ENCODE measurements at regions of chr14 and their contacts with region 1.

Region 1: DNA sequence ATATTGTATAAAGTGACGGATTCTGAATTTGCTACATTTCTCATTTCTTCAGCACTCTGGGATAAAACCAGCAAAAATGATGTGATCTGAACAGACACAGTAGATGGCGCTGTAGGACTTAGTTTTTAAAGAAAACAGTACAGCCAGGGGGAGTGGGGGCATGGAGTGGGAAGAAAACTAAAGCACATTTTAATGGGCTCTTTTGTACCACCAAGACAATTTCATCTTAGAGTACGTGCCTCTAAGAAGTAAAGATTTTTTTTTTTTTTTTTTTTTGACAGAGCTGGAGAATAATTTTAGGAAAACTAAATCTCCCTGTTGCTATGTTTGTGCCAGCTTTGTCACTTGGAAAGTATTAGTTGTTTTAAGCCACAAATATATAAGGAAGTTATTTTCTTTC is 124.4 kb downstream of the RAD51B start:
- DNase-seq: peak; percentile 82

Region 2: DNA sequence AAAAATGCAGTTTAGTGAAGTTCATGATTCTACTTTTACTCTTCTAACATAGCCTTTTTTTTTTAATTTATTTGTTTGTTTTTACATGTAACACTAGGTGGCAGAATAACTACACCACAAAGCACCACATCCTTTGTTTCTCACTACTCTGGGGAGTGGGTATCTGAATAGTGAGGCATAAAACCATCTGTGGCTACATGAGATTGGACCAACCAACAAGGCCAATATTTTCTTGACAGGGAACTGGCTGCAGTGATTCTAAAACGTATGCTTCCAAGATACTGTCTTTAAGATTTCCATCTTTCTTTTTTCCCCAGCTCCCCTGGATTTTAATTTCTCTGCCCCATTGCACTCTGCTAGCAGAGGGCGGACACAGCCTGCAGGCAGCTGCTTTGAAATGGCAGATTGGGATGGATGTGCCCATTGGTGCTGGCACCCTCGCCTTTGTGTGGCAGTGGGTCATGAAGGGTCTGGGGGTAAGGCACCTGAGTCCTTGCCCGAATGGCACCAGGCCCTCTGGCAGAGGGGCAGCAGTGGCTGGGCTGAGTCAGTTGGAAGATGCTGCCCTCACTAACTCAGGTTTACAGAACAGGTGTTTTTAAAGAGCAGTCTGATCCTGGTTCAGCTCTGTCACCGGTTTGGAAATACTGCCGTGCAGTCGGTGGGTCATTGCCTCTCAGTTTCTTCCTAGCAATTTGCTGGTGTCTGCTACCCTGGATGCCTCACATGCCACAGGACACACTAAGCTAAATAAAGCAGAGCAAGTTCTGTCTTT is 304.7 kb after region 1 on chr14:
- in situ Hi-C with region 1: loop called (anchors 25 kb)
- DNase-seq: peak; percentile 54

Region 3: GRCh38 chr14:68816262-68816942 is 872.5 kb after region 1 on chr14:
- in situ Hi-C with region 1: loop called (anchors 25 kb)
- DNase-seq: peak; percentile 91

Measured in KBM-7 (cell line).